Breast epithelium (tissue), 4 donors: ENCODE measurements at regions of chr11 and their contacts with region 1.

Region 1: GRCh38 chr11:118216621-118217481 is 8.0 kb downstream of the JAML start:
- DNase-seq: no peak
- H3K4me3 ChIP-seq: no peak overlapping the region
- H3K27ac ChIP-seq: no peak overlapping the region
- H3K4me1 ChIP-seq: no peaks in the 10 kb centered on the region
- H3K27me3 ChIP-seq: no peaks in the 10 kb centered on the region
- CTCF ChIP-seq: no peak
- POLR2A ChIP-seq: no peak

Region 2: GRCh38 chr11:118374729-118375128 is 157.9 kb after region 1 on chr11:
- intact Hi-C with region 1: no loop called
- DNase-seq: no peak
- H3K4me3 ChIP-seq: no peak overlapping the region
- H3K27ac ChIP-seq: peak overlapping the region in 1 of 2 donors; percentile 56
- H3K4me1 ChIP-seq: no peaks in the 10 kb centered on the region
- H3K27me3 ChIP-seq: no peaks in the 10 kb centered on the region
- CTCF ChIP-seq: no peak
- POLR2A ChIP-seq: no peak

Region 3: GRCh38 chr11:118911892-118912744 is 695.3 kb after region 1 on chr11:
- intact Hi-C with region 1: no loop called
- DNase-seq: peak; percentile 87 to 92
- H3K4me3 ChIP-seq: peak overlapping the region; percentile 34 to 62 (median 44)
- H3K27ac ChIP-seq: peak overlapping the region; percentile 96 to 100
- H3K4me1 ChIP-seq: peaks cover 78 to 84% of the 10 kb centered on the region in 2 donors
- H3K27me3 ChIP-seq: no peaks in the 10 kb centered on the region
- CTCF ChIP-seq: peak in 1 of 3 donors; percentile 7
- POLR2A ChIP-seq: no peak

Region 4: GRCh38 chr11:119403021-119403420 is 1186.2 kb after region 1 on chr11:
- intact Hi-C with region 1: loop called (anchors 10 kb)
- DNase-seq: no peak
- H3K4me3 ChIP-seq: no peak overlapping the region
- H3K27ac ChIP-seq: no peak overlapping the region
- H3K4me1 ChIP-seq: no peaks in the 10 kb centered on the region
- H3K27me3 ChIP-seq: no peaks in the 10 kb centered on the region
- CTCF ChIP-seq: no peak
- POLR2A ChIP-seq: no peak